Right ventricle myocardium inferior (tissue), 1 donor: ENCODE measurements at regions of chr15 and their contacts with region 1.

Region 1: GRCh38 chr15:41928637-41929620 is 35.1 kb upstream of the SPTBN5 start:
- DNase-seq: no peak
- ATAC-seq: peak; percentile 70

Region 2: DNA sequence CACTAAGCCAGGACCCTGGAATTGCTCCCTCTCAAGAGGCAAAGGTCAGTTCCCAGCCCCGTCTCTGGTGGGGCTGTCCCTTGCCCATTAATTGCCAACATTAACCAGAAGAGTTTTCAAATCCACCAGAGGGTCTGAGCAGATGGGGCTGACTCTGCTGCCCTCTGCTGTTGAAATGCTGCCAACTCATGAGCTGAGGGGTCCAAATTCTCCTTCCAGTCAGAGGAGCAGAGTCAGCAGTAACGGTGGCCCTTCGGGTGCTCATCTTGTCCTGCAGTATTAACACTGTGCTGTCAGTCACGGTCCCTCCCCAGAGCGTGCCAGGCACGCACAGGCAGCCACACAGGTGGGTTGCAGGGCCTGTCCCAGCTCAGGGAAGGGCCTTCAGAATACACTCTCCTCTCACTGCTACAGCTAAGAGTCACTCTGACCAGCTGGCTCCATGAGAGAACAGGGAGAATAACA is 24.4 kb before region 1 on chr15:
- intact Hi-C with region 1: loop called (anchors 1 kb)
- DNase-seq: no peak
- ATAC-seq: peak; percentile 67

Region 3: DNA sequence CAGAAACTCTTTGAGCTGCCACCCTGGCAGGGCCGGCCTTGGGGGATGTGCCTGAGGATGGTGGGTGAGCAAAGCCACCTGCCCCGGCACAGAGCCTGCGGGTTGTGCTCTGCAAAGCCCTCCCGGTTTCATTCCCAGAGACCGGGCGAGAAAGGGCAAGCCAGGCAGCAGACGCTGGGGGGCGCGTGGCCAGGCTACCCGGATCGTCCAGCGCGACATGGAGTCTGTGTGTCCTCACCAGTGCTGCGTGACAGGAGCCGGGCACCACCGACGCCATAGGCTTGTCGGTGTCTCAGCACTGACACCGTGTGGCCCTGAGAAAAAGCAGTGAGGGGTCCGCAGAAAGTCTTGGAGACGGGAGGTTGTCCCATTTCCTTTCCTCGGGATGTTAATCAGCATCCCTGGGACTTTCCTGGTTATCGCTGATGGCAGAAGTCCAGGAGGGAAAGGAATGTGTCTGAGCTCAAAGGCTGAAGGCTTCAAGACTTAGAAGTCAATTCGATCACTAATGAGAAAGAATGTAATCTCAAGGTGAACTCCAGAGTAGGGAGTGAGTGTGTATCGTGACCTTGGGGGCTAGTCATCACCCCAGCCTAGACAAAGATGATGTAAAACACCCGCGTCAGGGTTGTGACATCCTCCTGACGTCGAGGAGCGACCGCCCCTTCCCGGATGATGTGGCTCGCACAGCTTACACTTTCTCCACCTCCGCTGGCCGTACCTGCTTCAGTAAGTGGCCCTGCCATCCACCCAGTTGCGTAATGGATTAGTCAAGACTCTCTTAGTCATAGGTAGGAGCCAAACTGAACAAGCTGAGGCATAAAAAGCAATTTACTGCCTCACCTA is 128.2 kb after region 1 on chr15:
- intact Hi-C with region 1: loop called (anchors 10 kb)
- DNase-seq: peak; percentile 83
- ATAC-seq: peak; percentile 94